B cell (primary cell): ENCODE measurements at regions of chr21 and their contacts with region 1.

Region 1: DNA sequence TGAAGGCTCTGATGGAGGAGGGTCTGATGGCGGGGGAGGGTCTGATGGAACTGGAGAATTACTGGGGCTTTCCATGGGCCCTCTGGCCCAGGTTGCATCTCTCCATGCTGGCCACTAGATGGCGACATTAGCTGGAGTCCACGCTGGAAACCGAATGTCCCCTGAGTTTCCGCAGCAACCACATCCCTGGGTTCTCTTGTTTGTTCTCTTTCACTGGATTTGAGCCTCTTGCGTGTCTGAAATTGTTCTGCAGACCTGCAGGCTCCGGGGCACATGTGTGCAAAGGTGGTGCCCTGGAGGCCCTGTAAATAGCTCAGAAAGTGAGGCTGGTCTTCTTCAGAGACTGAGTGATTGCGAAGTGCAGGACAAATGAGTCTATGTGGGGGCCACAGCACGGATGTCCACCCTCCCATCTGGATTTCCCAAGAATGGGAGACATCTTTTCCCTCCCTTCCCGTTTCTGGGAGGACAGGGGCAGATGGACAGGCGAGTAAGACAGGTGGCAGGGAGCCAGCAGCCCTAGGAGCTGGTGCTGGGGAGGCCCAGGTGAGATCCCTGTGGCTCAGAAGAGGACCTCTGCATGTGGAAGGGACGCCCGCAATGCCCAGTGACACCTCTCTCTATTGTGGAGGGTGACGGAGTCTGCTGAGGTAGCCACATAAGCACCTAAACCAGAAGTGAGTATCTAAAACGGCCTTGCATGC is 73.2 kb upstream of the ABCG1 start:
- DNase-seq: peak; percentile 79
- ATAC-seq: peak; percentile 84
- H3K4me3 ChIP-seq: no peak overlapping the region
- H3K4me3 Mint-ChIP-seq: no peak overlapping the region
- H3K27ac ChIP-seq: no peak overlapping the region
- H3K27ac Mint-ChIP-seq: no peak overlapping the region
- H3K4me1 ChIP-seq: peaks cover 1 to 6% of the 10 kb centered on the region in 2 donors
- H3K4me1 Mint-ChIP-seq: peaks cover 7% of the 10 kb centered on the region
- H3K27me3 ChIP-seq: no peaks in the 10 kb centered on the region
- H3K27me3 Mint-ChIP-seq: no peaks in the 10 kb centered on the region
- CTCF ChIP-seq: peak; percentile 91

Region 2: DNA sequence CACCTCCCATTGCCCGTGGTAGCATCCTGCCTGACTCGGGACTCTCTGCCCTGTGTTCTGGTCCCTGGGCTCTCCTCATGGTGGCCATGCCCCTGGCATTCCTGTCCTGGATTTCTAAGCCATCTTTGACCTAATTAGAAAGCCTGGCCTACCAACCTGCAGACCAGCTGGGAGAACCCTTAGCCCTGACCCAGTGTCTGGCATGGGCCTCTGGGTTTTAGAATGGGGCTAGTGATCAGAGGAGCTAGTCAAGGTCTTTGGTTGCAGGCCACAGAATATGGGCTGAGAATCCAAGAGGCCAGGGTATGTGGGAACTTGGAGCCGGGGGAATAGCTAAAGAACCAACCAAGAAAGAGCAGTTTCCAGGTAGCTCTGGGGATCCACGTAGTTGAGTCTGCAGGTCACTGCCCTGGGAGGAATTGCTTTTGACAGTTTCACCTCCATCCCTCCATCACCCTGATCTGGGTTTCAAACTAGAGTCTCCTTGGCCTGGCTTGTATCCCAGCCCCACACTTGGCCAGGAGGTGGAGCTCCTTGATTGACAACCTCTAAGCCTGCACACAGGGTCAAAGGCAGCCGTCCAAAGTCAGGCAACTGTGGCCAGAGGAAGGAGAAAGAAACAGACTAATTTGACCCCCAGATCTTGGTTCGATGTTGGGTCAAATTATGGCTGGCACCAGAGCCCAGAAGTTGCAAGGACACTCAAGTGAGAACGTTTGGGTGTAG is 18.5 kb after region 1 on chr21:
- CTCF ChIA-PET with region 1: interaction called, 11 read pairs
- POLR2A ChIA-PET with region 1: no interaction called
- intact Hi-C with region 1: no loop called
- DNase-seq: peak; percentile 73
- ATAC-seq: peak; percentile 82
- H3K4me3 ChIP-seq: no peak overlapping the region
- H3K4me3 Mint-ChIP-seq: no peak overlapping the region
- H3K27ac ChIP-seq: no peak overlapping the region
- H3K27ac Mint-ChIP-seq: peak overlapping the region; percentile 43
- H3K4me1 ChIP-seq: peaks cover 8 to 15% of the 10 kb centered on the region in 2 donors
- H3K4me1 Mint-ChIP-seq: peaks cover 14% of the 10 kb centered on the region
- H3K27me3 ChIP-seq: peaks cover 0 to 5% (median 2%) of the 10 kb centered on the region in 4 experiments
- H3K27me3 Mint-ChIP-seq: peaks cover 3% of the 10 kb centered on the region
- CTCF ChIP-seq: peak; percentile 73

Region 3: GRCh38 chr21:42272984-42273600 is 127.4 kb after region 1 on chr21:
- CTCF ChIA-PET with region 1: interaction called, 11 read pairs
- POLR2A ChIA-PET with region 1: no interaction called
- intact Hi-C with region 1: no loop called
- DNase-seq: no peak
- ATAC-seq: no peak
- H3K4me3 ChIP-seq: no peak overlapping the region
- H3K4me3 Mint-ChIP-seq: no peak overlapping the region
- H3K27ac ChIP-seq: no peak overlapping the region
- H3K27ac Mint-ChIP-seq: no peak overlapping the region
- H3K4me1 ChIP-seq: peaks cover 15 to 17% of the 10 kb centered on the region in 2 donors
- H3K4me1 Mint-ChIP-seq: peaks cover 12% of the 10 kb centered on the region
- H3K27me3 ChIP-seq: no peaks in the 10 kb centered on the region
- H3K27me3 Mint-ChIP-seq: no peaks in the 10 kb centered on the region
- CTCF ChIP-seq: no peak

Region 4: GRCh38 chr21:42309753-42310221 is 164.1 kb after region 1 on chr21:
- CTCF ChIA-PET with region 1: interaction called, 11 read pairs
- POLR2A ChIA-PET with region 1: no interaction called
- intact Hi-C with region 1: no loop called
- DNase-seq: peak; percentile 75
- ATAC-seq: peak; percentile 76
- H3K4me3 ChIP-seq: no peak overlapping the region
- H3K4me3 Mint-ChIP-seq: no peak overlapping the region
- H3K27ac ChIP-seq: no peak overlapping the region
- H3K27ac Mint-ChIP-seq: no peak overlapping the region
- H3K4me1 ChIP-seq: peaks cover 7 to 14% of the 10 kb centered on the region in 2 donors
- H3K4me1 Mint-ChIP-seq: peaks cover 4% of the 10 kb centered on the region
- H3K27me3 ChIP-seq: peaks cover 0 to 42% (median 13%) of the 10 kb centered on the region in 4 experiments
- H3K27me3 Mint-ChIP-seq: peaks cover 26% of the 10 kb centered on the region
- CTCF ChIP-seq: peak; percentile 89

Region 5: GRCh38 chr21:42337830-42338728 is 192.4 kb after region 1 on chr21:
- CTCF ChIA-PET with region 1: interaction called, 11 read pairs
- POLR2A ChIA-PET with region 1: no interaction called
- intact Hi-C with region 1: no loop called
- DNase-seq: peak; percentile 84
- ATAC-seq: peak; percentile 98
- H3K4me3 ChIP-seq: no peak overlapping the region
- H3K4me3 Mint-ChIP-seq: no peak overlapping the region
- H3K27ac ChIP-seq: no peak overlapping the region
- H3K27ac Mint-ChIP-seq: peak overlapping the region; percentile 11
- H3K4me1 ChIP-seq: peaks cover 7 to 8% of the 10 kb centered on the region in 2 donors
- H3K4me1 Mint-ChIP-seq: peaks cover 8% of the 10 kb centered on the region
- H3K27me3 ChIP-seq: peaks cover 0 to 10% (median 6%) of the 10 kb centered on the region in 4 experiments
- H3K27me3 Mint-ChIP-seq: peaks cover 17% of the 10 kb centered on the region
- CTCF ChIP-seq: peak; percentile 79

Region 6: DNA sequence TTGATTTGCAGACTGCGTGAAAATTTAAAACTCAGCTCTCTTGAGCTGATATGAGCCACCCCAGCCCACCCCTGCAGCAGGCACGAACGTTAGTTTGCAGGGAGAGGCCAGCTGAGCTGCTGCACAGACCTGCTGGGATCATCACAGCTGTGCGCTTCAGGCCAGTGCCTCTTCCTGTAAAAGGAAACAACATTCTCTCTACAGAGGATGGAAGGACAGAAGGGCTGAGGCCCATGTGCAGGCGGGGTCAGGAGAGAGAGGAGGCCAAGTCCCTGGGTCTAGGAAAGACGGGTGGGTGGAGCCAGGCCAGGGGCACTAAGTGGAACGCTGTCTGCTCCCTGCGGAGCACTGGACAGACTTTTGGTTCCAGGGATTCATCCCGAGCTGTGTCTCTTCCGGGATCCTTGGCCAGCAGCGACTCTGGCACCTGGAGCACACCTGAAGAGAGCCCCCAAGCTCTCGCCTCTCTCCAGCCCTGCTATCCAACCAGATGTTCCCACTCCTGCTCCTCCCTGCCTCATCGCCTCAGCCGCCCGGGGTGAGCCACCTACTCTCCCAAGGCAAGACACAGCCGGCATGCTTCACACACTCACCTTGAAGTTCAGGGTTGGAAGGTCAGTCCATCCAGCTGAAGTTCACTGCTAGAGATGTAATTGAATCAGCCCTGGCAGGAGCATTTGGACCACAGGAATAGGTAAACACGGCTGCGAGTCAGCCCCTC is 307.9 kb after region 1 on chr21:
- CTCF ChIA-PET with region 1: interaction called, 9 read pairs
- POLR2A ChIA-PET with region 1: no interaction called
- intact Hi-C with region 1: loop called (anchors 1 kb)
- DNase-seq: no peak
- ATAC-seq: no peak
- H3K4me3 ChIP-seq: no peak overlapping the region
- H3K4me3 Mint-ChIP-seq: no peak overlapping the region
- H3K27ac ChIP-seq: no peak overlapping the region
- H3K27ac Mint-ChIP-seq: no peak overlapping the region
- H3K4me1 ChIP-seq: peaks cover 0 to 9% of the 10 kb centered on the region in 2 donors
- H3K4me1 Mint-ChIP-seq: peaks cover 6% of the 10 kb centered on the region
- H3K27me3 ChIP-seq: peaks cover 0 to 12% (median 2%) of the 10 kb centered on the region in 4 experiments
- H3K27me3 Mint-ChIP-seq: no peaks in the 10 kb centered on the region
- CTCF ChIP-seq: no peak